Endothelial cell of umbilical vein (primary cell): ENCODE measurements at regions of chr2 and their contacts with region 1.

Region 1: DNA sequence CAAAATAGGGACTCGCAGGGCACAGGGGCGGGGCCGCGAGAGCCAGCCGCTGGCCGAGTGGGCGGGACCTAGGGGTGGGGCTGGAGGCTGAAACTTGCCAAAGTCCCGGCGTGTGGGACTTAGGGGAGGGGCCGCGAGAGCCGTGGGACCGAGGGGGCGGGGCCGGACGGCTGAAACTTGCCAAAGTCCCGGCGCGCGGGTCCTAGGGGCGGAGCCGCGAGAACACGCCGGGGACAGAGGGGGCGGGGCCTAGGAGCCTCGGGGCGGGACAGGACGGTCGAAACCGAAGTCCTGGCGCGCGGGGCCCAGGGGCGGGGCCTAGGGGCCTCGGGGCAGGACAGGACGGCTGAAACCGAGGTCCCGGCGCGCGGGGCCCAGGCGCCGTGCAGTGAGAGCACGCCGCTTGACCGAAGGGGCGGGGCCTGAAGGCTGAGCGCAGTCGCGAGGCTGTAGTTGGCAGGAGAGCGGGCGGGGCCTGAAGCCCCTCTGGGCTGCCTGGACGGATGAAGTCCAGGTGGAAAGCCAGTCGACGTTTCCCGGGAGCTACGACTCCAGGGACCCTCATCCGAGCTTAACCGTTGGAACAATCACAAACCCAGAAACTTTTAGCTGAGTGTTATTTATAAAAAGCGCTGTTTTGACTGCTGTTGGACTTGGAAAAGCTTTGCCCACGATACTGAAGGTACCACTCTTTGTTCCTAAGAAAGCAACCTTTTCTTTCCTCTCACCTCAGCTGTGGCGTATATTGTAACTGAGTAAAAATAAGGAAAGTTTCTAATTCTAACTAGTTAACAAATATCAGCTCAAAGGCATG is 475 bp upstream of the BARD1 start:
- DNase-seq: peak; percentile 100
- H3K4me3 ChIP-seq: peak overlapping the region; percentile 71 to 87 (median 85)
- H3K27ac ChIP-seq: peak overlapping the region; percentile 55
- H3K4me1 ChIP-seq: peaks cover 30% of the 10 kb centered on the region
- H3K27me3 ChIP-seq: peaks cover 0 to 6% of the 10 kb centered on the region in 2 experiments
- CTCF ChIP-seq: no peak
- POLR2A ChIP-seq: no peak

Region 2: GRCh38 chr2:213284105-213285090 is 1525.6 kb before region 1 on chr2 and contains the start of gene SPAG16:
- CTCF ChIA-PET with region 1: no interaction called
- POLR2A ChIA-PET with region 1: no interaction called
- dilution Hi-C with region 1: no loop called
- intact Hi-C with region 1: loop called (anchors 5 kb)
- DNase-seq: peak; percentile 96
- H3K4me3 ChIP-seq: peak within 1 kb of the TSS; percentile 79 to 93 (median 87)
- H3K27ac ChIP-seq: peak within 1 kb of the TSS; percentile 41
- H3K4me1 ChIP-seq: peaks cover 6% of the 10 kb centered on the region
- H3K27me3 ChIP-seq: no peaks in the 10 kb centered on the region
- CTCF ChIP-seq: no peak
- POLR2A ChIP-seq: peak; percentile 78
- total RNA-seq, gene SPAG16: 7.4 and 7.7 TPM in 2 replicates

Region 3: GRCh38 chr2:214730800-214731407 is 79.1 kb before region 1 on chr2:
- CTCF ChIA-PET with region 1: interaction called, 3 read pairs
- POLR2A ChIA-PET with region 1: no interaction called
- dilution Hi-C with region 1: no loop called
- intact Hi-C with region 1: loop called (anchors 5 kb)
- DNase-seq: peak; percentile 19
- H3K4me3 ChIP-seq: no peak overlapping the region
- H3K27ac ChIP-seq: peak overlapping the region; percentile 24
- H3K4me1 ChIP-seq: peaks cover 2% of the 10 kb centered on the region
- H3K27me3 ChIP-seq: no peaks in the 10 kb centered on the region
- CTCF ChIP-seq: no peak
- POLR2A ChIP-seq: no peak

Region 4: GRCh38 chr2:214781226-214781625 is 28.7 kb before region 1 on chr2:
- CTCF ChIA-PET with region 1: no interaction called
- POLR2A ChIA-PET with region 1: no interaction called
- dilution Hi-C with region 1: no loop called
- intact Hi-C with region 1: no loop called
- DNase-seq: no peak
- H3K4me3 ChIP-seq: no peak overlapping the region
- H3K27ac ChIP-seq: no peak overlapping the region
- H3K4me1 ChIP-seq: peaks cover 2% of the 10 kb centered on the region
- H3K27me3 ChIP-seq: no peaks in the 10 kb centered on the region
- CTCF ChIP-seq: no peak
- POLR2A ChIP-seq: no peak

Region 5: DNA sequence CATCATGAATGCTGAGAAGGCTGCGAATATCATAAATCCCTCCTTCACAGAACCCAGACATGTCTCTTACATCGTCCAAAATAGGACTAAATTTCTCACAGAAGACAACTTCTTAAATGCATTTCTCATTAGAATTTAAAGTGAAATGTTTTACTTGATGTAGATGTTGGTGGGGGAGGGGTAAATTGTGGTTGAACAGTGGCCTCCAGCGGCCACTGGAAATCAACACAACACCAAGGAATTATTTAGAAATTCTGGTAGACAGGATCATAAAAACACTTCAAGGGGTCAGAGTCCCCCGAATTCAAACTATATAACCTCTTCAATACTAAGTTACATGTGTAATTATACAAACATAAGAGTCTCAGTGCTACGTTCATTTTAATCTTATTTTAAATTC is 192.5 kb after region 1 on chr2:
- CTCF ChIA-PET with region 1: no interaction called
- POLR2A ChIA-PET with region 1: no interaction called
- dilution Hi-C with region 1: no loop called
- intact Hi-C with region 1: no loop called
- DNase-seq: peak; percentile 33
- H3K4me3 ChIP-seq: no peak overlapping the region
- H3K27ac ChIP-seq: no peak overlapping the region
- H3K4me1 ChIP-seq: no peaks in the 10 kb centered on the region
- H3K27me3 ChIP-seq: peaks cover 0 to 2% of the 10 kb centered on the region in 2 experiments
- CTCF ChIP-seq: peak; percentile 34 to 40
- POLR2A ChIP-seq: no peak

Region 6: GRCh38 chr2:215311625-215312396 is 501.9 kb after region 1 on chr2 and contains the start of gene ATIC:
- CTCF ChIA-PET with region 1: no interaction called
- POLR2A ChIA-PET with region 1: no interaction called
- dilution Hi-C with region 1: no loop called
- intact Hi-C with region 1: loop called (anchors 2 kb)
- DNase-seq: peak; percentile 88
- H3K4me3 ChIP-seq: peak within 1 kb of the TSS; percentile 52 to 67 (median 67)
- H3K27ac ChIP-seq: peak within 1 kb of the TSS; percentile 63
- H3K4me1 ChIP-seq: peaks cover 10% of the 10 kb centered on the region
- H3K27me3 ChIP-seq: no peaks in the 10 kb centered on the region
- CTCF ChIP-seq: no peak
- POLR2A ChIP-seq: peak; percentile 77
- total RNA-seq, gene ATIC: 73.9 and 80.2 TPM in 2 replicates